ENCODE measurements at regions of chr1 and their contacts with region 1.

Region 1: GRCh38 chr1:240967070-240967724 is 355.2 kb upstream of the GREM2 start:
- DNase-seq: peak; percentile 60
- H3K4me3 Mint-ChIP-seq: no peak overlapping the region
- H3K27ac Mint-ChIP-seq: no peak overlapping the region
- H3K4me1 Mint-ChIP-seq: no peaks in the 10 kb centered on the region
- H3K27me3 Mint-ChIP-seq: no peaks in the 10 kb centered on the region
- CTCF ChIP-seq: peak; percentile 76

Region 2: GRCh38 chr1:240946926-240947325 is 20.3 kb before region 1 on chr1:
- CTCF ChIA-PET with region 1: interaction called, 19 read pairs
- POLR2A ChIA-PET with region 1: no interaction called
- intact Hi-C with region 1: no loop called
- DNase-seq: peak; percentile 85
- H3K4me3 Mint-ChIP-seq: no peak overlapping the region
- H3K27ac Mint-ChIP-seq: no peak overlapping the region
- H3K4me1 Mint-ChIP-seq: no peaks in the 10 kb centered on the region
- H3K27me3 Mint-ChIP-seq: no peaks in the 10 kb centered on the region
- CTCF ChIP-seq: peak; percentile 81

Region 3: GRCh38 chr1:241077386-241078147 is 110.4 kb after region 1 on chr1:
- CTCF ChIA-PET with region 1: no interaction called
- POLR2A ChIA-PET with region 1: no interaction called
- intact Hi-C with region 1: no loop called
- DNase-seq: no peak
- H3K4me3 Mint-ChIP-seq: no peak overlapping the region
- H3K27ac Mint-ChIP-seq: no peak overlapping the region
- H3K4me1 Mint-ChIP-seq: peaks cover 6% of the 10 kb centered on the region
- H3K27me3 Mint-ChIP-seq: no peaks in the 10 kb centered on the region
- CTCF ChIP-seq: no peak

Region 4: GRCh38 chr1:241269116-241269515 is 301.9 kb after region 1 on chr1:
- CTCF ChIA-PET with region 1: interaction called, 10 read pairs
- POLR2A ChIA-PET with region 1: no interaction called
- intact Hi-C with region 1: loop called (anchors 1 kb)
- DNase-seq: peak; percentile 56
- H3K4me3 Mint-ChIP-seq: no peak overlapping the region
- H3K27ac Mint-ChIP-seq: no peak overlapping the region
- H3K4me1 Mint-ChIP-seq: no peaks in the 10 kb centered on the region
- H3K27me3 Mint-ChIP-seq: no peaks in the 10 kb centered on the region
- CTCF ChIP-seq: peak; percentile 38

Region 5: DNA sequence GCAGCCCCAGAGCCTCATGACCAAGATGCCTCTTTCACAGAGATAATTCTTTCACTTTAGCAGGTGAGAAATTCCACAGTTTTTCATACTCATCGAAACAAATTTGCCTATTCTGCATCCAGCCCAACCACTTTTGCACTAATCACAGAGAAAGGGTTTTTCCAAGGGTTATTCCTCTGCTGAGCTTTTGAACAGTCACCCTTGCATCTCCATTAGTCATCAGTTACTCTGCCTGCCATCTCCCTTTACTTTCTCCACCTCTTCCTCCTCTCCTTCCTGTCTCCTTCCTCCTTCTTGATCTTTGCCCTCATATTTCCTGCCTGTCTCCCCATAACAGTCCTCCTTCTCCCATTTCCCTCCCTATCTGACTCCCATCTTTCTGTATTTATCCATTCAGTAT is 508.5 kb after region 1 on chr1:
- CTCF ChIA-PET with region 1: interaction called, 13 read pairs
- POLR2A ChIA-PET with region 1: no interaction called
- intact Hi-C with region 1: no loop called
- DNase-seq: no peak
- H3K4me3 Mint-ChIP-seq: no peak overlapping the region
- H3K27ac Mint-ChIP-seq: no peak overlapping the region
- H3K4me1 Mint-ChIP-seq: no peaks in the 10 kb centered on the region
- H3K27me3 Mint-ChIP-seq: no peaks in the 10 kb centered on the region
- CTCF ChIP-seq: no peak

Region 6: GRCh38 chr1:241507189-241507863 is 540.1 kb after region 1 on chr1:
- CTCF ChIA-PET with region 1: interaction called, 12 read pairs
- POLR2A ChIA-PET with region 1: no interaction called
- intact Hi-C with region 1: no loop called
- DNase-seq: no peak
- H3K4me3 Mint-ChIP-seq: no peak overlapping the region
- H3K27ac Mint-ChIP-seq: peak overlapping the region; percentile 53
- H3K4me1 Mint-ChIP-seq: peaks cover 5% of the 10 kb centered on the region
- H3K27me3 Mint-ChIP-seq: no peaks in the 10 kb centered on the region
- CTCF ChIP-seq: no peak